Thyroid gland (tissue), 4 donors: ENCODE measurements at regions of chr10 and their contacts with region 1.

Region 1: DNA sequence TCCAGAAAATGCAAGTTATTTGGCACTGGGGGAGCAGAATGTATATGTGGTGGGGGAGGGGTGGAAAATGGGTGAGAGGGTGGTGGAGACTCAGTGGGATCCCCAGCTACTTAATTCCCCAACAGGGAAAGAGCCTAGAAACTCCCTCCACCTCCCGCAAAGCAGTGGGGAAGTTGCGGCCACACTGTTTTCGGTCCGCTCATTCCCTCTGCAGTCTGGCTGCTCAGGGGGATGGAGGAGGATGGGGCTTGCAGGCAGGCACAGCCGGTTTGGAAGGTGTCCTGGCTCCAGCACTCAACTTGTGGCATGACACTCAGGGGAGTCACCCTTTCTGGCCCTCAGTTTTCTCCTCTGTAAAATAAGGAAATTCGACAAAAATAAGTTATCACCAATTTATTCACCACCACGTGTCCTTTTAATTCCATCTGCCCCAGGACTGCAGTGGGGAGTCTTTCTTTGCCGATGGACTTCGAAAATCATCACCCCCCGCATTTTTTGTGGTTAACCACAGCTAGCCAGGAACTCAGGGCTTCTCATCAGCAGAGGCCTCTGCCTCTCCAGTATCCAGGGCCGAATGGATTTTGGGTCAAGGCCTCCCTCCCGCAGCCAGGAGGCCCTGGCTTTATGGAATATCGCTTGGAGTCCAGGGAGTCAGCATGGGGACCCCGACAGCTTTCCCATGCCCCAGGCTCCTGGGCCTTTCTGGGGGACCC is 1.6 kb upstream of the HTRA1 start:
- DNase-seq: no peak
- H3K4me3 ChIP-seq: no peak overlapping the region
- H3K27ac ChIP-seq: no peak overlapping the region
- H3K4me1 ChIP-seq: peaks cover 0 to 13% of the 10 kb centered on the region in 2 donors
- H3K27me3 ChIP-seq: no peaks in the 10 kb centered on the region
- CTCF ChIP-seq: no peak
- POLR2A ChIP-seq: no peak

Region 2: DNA sequence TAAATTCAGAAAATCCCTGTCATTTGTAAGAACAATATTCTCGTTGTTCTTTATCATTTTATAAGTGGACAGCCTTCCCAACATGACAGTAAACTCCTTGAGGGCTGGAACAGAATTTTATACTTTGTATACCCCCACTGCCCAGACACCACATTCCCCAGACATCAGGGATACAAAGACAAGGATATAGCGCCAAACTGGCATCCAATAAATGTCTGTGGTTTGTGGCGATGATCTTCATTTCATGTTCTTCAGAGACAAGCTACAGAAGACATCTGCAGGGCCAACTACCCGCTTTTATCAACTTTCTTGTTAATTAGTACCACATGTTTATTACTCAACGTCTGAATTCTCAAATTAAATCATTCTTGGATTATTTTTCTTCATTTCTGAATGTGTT is 687.8 kb before region 1 on chr10:
- intact Hi-C with region 1: no loop called
- DNase-seq: no peak
- H3K4me3 ChIP-seq: no peak overlapping the region
- H3K27ac ChIP-seq: no peak overlapping the region
- H3K4me1 ChIP-seq: peaks cover 17 to 22% of the 10 kb centered on the region in 2 donors
- H3K27me3 ChIP-seq: no peaks in the 10 kb centered on the region
- CTCF ChIP-seq: no peak
- POLR2A ChIP-seq: no peak

Region 3: DNA sequence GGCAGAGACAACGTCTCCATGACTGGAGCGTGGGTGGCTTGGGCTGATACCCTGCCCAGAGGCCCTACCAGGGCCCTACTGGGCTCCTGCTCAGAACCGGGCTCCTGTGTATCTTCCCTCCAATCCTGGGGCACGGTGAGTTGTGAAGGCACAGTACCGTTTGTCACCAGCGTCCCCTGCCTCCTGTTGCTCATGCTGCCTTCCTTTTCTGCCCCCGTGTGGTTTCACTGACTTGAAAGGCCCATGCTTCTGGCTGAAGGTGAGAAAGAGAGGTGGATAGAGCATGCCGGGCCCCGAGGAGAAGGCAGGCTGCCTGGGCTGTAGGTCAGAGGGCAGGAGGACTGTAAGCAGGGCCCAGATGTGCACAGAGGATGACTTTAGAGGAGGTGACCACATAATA is 91.7 kb after region 1 on chr10:
- intact Hi-C with region 1: loop called (anchors 5 kb)
- DNase-seq: peak in 1 of 2 donors; percentile 5
- H3K4me3 ChIP-seq: no peak overlapping the region
- H3K27ac ChIP-seq: peak overlapping the region in 2 of 3 donors; percentile 46 to 62
- H3K4me1 ChIP-seq: peaks cover 19 to 34% of the 10 kb centered on the region in 2 donors
- H3K27me3 ChIP-seq: no peaks in the 10 kb centered on the region
- CTCF ChIP-seq: no peak
- POLR2A ChIP-seq: no peak